Calu3 (cell line): ENCODE measurements at regions of chr9 and their contacts with region 1.

Region 1: DNA sequence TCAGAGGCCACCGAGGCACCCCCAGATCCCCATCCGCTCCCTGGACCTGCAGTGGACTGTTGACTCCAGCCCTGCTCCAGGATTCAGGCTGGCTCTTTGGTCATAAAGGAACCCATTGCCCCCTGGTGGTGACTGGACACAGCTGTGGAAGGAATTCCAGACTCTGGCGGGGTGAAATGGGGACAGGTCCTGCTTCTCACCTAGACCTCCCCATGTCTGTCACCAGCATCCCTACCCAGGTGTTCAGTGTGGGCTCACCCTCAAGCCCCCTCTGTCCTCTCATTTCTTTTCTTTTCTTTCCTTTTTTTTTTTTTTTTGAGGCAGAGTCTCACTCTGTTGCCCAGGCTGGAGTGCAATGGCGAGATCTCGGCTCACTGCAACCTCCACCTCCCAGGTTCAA is 25.5 kb upstream of the STXBP1 start:
- DNase-seq: peak; percentile 79
- H3K4me3 Mint-ChIP-seq: no peak overlapping the region
- H3K27ac Mint-ChIP-seq: no peak overlapping the region
- H3K4me1 Mint-ChIP-seq: peaks cover 13% of the 10 kb centered on the region
- H3K27me3 Mint-ChIP-seq: no peaks in the 10 kb centered on the region
- CTCF ChIP-seq: peak; percentile 59

Region 2: GRCh38 chr9:127360829-127361228 is 225.7 kb before region 1 on chr9:
- CTCF ChIA-PET with region 1: no interaction called
- intact Hi-C with region 1: no loop called
- DNase-seq: no peak
- H3K4me3 Mint-ChIP-seq: no peak overlapping the region
- H3K27ac Mint-ChIP-seq: no peak overlapping the region
- H3K4me1 Mint-ChIP-seq: no peaks in the 10 kb centered on the region
- H3K27me3 Mint-ChIP-seq: no peaks in the 10 kb centered on the region
- CTCF ChIP-seq: no peak

Region 3: DNA sequence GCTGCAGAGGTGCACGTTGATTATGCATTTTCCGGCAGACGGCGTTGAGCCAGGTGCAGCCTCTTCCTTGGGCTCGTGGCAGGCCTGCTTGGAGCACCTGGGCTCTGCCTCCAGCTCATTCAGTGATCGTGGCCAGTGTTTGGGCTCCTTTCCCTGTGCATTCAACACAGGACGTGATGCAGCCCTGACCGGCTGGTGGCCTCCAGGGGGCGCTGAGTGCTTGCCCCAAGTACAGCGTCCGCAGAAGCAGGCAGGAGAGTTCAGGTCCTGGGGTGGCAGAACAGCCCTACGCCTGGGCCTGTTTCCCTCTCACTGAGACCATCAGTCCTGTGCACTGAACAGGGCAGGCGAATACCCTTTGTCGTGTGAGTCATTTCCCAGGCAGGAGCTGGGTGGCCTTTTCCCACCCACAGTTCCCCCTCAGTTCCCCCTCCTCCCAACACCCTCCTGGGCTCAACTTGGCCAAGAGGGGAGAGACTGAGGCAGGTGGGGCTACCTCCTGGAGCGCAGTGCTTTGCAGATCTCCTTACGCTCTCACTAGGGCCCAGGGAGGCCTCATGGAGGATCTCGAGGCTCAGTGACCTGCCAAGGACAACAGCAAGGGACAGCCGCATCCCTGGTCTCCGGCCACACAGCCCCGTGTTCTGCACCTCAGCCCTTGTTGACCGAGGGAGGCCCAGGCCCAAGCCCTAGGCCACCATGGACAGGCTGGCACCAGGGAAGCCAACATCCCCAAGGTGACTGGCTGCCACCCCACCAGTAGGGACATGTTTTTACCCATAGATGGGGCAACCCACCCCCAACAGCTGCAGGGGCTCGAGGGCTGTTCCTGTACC is 82.4 kb before region 1 on chr9:
- CTCF ChIA-PET with region 1: no interaction called
- intact Hi-C with region 1: loop called (anchors 2 kb)
- DNase-seq: peak; percentile 76
- H3K4me3 Mint-ChIP-seq: no peak overlapping the region
- H3K27ac Mint-ChIP-seq: no peak overlapping the region
- H3K4me1 Mint-ChIP-seq: no peaks in the 10 kb centered on the region
- H3K27me3 Mint-ChIP-seq: no peaks in the 10 kb centered on the region
- CTCF ChIP-seq: peak; percentile 78

Region 4: GRCh38 chr9:127514468-127514867 is 72.1 kb before region 1 on chr9:
- CTCF ChIA-PET with region 1: no interaction called
- intact Hi-C with region 1: no loop called
- DNase-seq: no peak
- H3K4me3 Mint-ChIP-seq: no peak overlapping the region
- H3K27ac Mint-ChIP-seq: no peak overlapping the region
- H3K4me1 Mint-ChIP-seq: no peaks in the 10 kb centered on the region
- H3K27me3 Mint-ChIP-seq: no peaks in the 10 kb centered on the region
- CTCF ChIP-seq: no peak

Region 5: GRCh38 chr9:127916665-127917613 is 330.4 kb after region 1 on chr9 and contains the start of gene ST6GALNAC4:
- CTCF ChIA-PET with region 1: no interaction called
- intact Hi-C with region 1: loop called (anchors 2 kb)
- DNase-seq: peak; percentile 91
- H3K4me3 Mint-ChIP-seq: peak within 1 kb of the TSS; percentile 65
- H3K27ac Mint-ChIP-seq: no peak within 1 kb of the TSS
- H3K4me1 Mint-ChIP-seq: peaks cover 13% of the 10 kb centered on the region
- H3K27me3 Mint-ChIP-seq: no peaks in the 10 kb centered on the region
- CTCF ChIP-seq: no peak
- total RNA-seq, gene ST6GALNAC4: 11.8 and 12.8 TPM in 2 replicates